Ovary (tissue), 10 donors: ENCODE measurements at regions of chr6 and their contacts with region 1.

Region 1: DNA sequence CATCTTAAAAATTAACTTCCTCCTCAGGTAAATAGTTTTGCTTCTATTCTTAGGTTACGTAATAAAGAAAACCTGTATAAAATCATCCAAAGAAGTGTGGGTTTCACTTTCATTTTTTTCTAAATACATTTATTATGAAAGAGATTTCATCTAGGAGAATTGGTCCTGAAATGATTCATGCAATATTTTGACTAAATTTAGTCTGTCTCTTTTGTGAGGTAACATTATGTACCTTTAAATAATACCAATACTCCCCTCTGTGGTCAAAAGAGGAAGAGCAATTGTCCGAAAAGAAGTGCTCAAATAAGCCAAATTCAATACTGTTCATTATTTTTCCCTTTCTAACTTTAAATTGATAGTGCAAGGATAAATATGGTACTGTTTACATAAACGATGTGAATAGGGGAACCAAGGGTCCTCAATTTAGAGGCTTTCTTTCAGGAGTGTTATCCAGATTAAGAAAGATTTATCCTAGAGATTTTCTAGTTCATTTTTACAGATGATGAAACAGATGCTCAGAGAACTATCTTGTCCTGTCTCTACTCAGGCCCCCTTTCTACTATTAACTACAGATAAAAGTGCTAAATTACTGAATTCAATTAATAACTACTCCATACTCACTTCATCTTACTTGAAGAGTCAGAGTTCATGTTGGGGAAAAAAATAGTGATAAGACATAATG is 26.2 kb downstream of the CYP39A1 start:
- DNase-seq: no peak
- H3K4me3 ChIP-seq: no peak overlapping the region
- H3K27ac ChIP-seq: no peak overlapping the region
- H3K4me1 ChIP-seq: no peaks in the 10 kb centered on the region
- H3K27me3 ChIP-seq: no peaks in the 10 kb centered on the region
- CTCF ChIP-seq: peak; percentile 28 to 75 (median 46)
- EP300 ChIP-seq: no peak
- POLR2A ChIP-seq: no peak

Region 2: DNA sequence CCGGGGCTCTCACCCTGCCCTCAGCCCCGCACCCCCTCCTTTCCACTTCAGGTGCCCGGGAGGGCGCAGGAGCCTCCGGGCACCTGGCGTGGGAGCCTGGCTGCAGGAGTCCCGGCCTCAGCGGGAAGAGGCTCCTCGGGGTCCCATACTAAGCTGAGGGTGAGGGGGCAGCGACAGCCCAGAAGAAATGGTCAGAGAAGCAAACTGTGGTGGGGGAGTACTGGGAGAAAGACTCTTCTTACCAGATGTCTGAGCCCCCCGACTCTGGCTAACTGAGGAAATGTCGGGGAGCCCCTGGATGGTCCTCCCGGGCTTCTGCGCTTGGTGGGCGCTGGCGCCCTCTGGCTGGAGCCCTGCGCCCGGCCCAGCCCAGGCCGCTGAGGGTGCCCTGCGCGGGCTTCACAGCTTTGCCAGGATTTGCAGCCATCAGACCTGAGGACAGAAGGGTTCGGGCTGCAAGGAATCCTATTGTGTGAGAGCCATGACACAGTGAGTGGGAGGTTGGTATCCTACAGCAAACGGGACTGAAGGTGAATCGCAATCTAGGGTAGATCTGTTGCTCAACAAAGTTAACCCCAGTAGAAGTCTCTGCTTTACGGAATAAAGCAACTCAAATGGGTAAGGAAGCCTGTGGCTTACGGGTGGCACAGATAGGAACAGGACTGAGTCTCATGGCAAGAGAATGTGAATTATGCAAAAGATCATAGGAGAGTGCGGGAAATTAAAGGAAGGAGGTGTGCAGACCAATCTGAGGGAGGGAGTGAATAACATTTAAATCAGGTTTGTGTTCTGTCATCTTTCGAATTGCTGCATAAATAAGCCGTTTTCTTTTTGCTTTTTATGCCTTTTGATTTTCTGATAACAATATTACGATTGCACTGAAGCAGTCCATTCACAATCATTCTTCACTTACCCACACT is 134.5 kb before region 1 on chr6:
- intact Hi-C with region 1: loop called in 2 of 4 experiments (anchors 5 to 10 kb)
- DNase-seq: peak; percentile 50 to 74 (median 60)
- H3K4me3 ChIP-seq: peak overlapping the region; percentile 56
- H3K27ac ChIP-seq: peak overlapping the region; percentile 74 to 84
- H3K4me1 ChIP-seq: peaks cover 3% of the 10 kb centered on the region
- H3K27me3 ChIP-seq: no peaks in the 10 kb centered on the region
- CTCF ChIP-seq: peak; percentile 55 to 66 (median 59)
- EP300 ChIP-seq: no peak
- POLR2A ChIP-seq: no peak